Psoas muscle (tissue), 8 donors: ENCODE measurements at regions of chr6 and their contacts with region 1.

Region 1: DNA sequence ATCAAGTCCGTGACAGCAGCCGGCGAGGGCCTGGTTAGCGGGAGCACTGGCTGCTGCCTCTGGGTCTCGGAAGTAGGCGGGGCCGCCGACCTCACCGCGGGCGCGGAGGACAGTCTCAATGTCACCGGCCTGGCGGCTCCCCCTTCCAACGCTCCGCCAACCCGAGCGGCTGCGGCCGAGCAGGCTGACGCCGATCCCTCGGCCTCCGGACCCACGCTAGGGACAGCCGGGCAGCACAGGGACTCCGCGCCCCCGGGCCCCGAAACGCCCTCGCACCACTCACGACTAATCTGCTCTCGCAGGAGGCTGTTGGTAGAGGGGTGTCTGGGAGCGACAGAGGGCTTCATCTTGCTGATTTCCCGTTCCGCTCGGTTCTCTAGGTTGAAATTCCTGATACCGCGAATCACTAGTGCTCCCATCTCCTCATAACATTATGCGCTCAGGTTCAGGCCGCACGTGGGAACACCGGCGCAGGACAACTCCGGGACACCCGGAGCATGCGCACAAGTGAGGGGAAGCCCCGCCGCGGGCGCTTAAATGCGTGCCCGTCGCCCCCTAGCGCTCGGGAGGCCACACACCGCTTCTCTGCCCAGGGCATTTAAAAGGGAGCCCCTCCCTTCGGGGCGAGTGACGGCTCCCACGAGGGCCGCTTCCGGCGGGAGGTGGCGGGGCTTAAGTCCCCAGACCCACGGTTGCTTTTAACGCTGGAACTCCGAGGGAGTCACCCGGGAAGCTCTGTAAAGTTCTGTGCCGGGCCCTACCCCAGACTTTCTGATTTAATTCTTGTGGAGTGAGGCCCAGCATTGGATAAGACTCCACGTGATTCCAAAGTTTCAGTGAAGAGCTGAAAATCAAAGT is at the start of gene NDUFAF4:
- DNase-seq: peak; percentile 98
- ATAC-seq: peak; percentile 98 to 99 (median 99)
- H3K4me3 ChIP-seq: peak within 1 kb of the TSS; percentile 97
- H3K27ac ChIP-seq: peak within 1 kb of the TSS; percentile 94
- H3K4me1 ChIP-seq: peaks cover 31% of the 10 kb centered on the region
- H3K27me3 ChIP-seq: no peaks in the 10 kb centered on the region
- CTCF ChIP-seq: peak; percentile 91
- total RNA-seq, gene NDUFAF4: 61.3 to 113 (median 79.7) TPM

Region 2: GRCh38 chr6:95948324-95948723 is 949.3 kb before region 1 on chr6:
- intact Hi-C with region 1: no loop called
- DNase-seq: no peak
- ATAC-seq: no peak
- H3K4me3 ChIP-seq: no peak overlapping the region
- H3K27ac ChIP-seq: no peak overlapping the region
- H3K4me1 ChIP-seq: no peaks in the 10 kb centered on the region
- H3K27me3 ChIP-seq: no peaks in the 10 kb centered on the region
- CTCF ChIP-seq: no peak

Region 3: GRCh38 chr6:96532399-96532798 is 365.2 kb before region 1 on chr6:
- intact Hi-C with region 1: loop called (anchors 5 to 10 kb)
- DNase-seq: no peak
- ATAC-seq: no peak
- H3K4me3 ChIP-seq: no peak overlapping the region
- H3K27ac ChIP-seq: no peak overlapping the region
- H3K4me1 ChIP-seq: no peaks in the 10 kb centered on the region
- H3K27me3 ChIP-seq: no peaks in the 10 kb centered on the region
- CTCF ChIP-seq: no peak

Region 4: GRCh38 chr6:97053643-97054411 is 156.2 kb after region 1 on chr6:
- intact Hi-C with region 1: loop called (anchors 1 to 5 kb)
- DNase-seq: no peak
- ATAC-seq: no peak
- H3K4me3 ChIP-seq: no peak overlapping the region
- H3K27ac ChIP-seq: no peak overlapping the region
- H3K4me1 ChIP-seq: no peaks in the 10 kb centered on the region
- H3K27me3 ChIP-seq: no peaks in the 10 kb centered on the region
- CTCF ChIP-seq: peak; percentile 50

Region 5: GRCh38 chr6:97282726-97283617 is 385.4 kb after region 1 on chr6 and contains the start of gene MMS22L:
- intact Hi-C with region 1: loop called in 1 of 2 experiments (anchors 10 kb)
- DNase-seq: peak; percentile 92 to 96
- ATAC-seq: peak; percentile 96 to 100 (median 99)
- H3K4me3 ChIP-seq: peak within 1 kb of the TSS; percentile 98
- H3K27ac ChIP-seq: peak within 1 kb of the TSS; percentile 30
- H3K4me1 ChIP-seq: no peaks in the 10 kb centered on the region
- H3K27me3 ChIP-seq: no peaks in the 10 kb centered on the region
- CTCF ChIP-seq: no peak
- total RNA-seq, gene MMS22L: 1.1 to 1.6 (median 1.3) TPM